ENCODE measurements at regions of chr20 and their contacts with region 1.

Region 1: GRCh38 chr20:38221119-38221589 is 39.4 kb downstream of the KIAA1755 start:
- DNase-seq: peak; percentile 80
- H3K4me3 ChIP-seq: no peak overlapping the region
- H3K27ac ChIP-seq: no peak overlapping the region
- H3K4me1 ChIP-seq: peaks cover 0 to 22% (median 8%) of the 10 kb centered on the region in 4 donors
- H3K27me3 ChIP-seq: no peaks in the 10 kb centered on the region
- CTCF ChIP-seq: peak; percentile 66 to 83 (median 76)
- EP300 ChIP-seq: no peak
- POLR2A ChIP-seq: no peak

Region 2: GRCh38 chr20:37564388-37565133 is 656.6 kb before region 1 on chr20:
- intact Hi-C with region 1: loop called (anchors 5 kb)
- DNase-seq: no peak
- H3K4me3 ChIP-seq: no peak overlapping the region
- H3K27ac ChIP-seq: no peak overlapping the region
- H3K4me1 ChIP-seq: peaks cover 0 to 6% (median 0%) of the 10 kb centered on the region in 4 donors
- H3K27me3 ChIP-seq: peaks cover 0 to 73% (median 32%) of the 10 kb centered on the region in 3 donors
- CTCF ChIP-seq: peak; percentile 56 to 85 (median 73)
- EP300 ChIP-seq: no peak
- POLR2A ChIP-seq: no peak

Region 3: GRCh38 chr20:38057351-38057972 is 163.7 kb before region 1 on chr20:
- intact Hi-C with region 1: loop called (anchors 1 kb)
- DNase-seq: peak; percentile 89
- H3K4me3 ChIP-seq: no peak overlapping the region
- H3K27ac ChIP-seq: no peak overlapping the region
- H3K4me1 ChIP-seq: no peaks in the 10 kb centered on the region
- H3K27me3 ChIP-seq: no peaks in the 10 kb centered on the region
- CTCF ChIP-seq: peak; percentile 66 to 94 (median 87)
- EP300 ChIP-seq: no peak
- POLR2A ChIP-seq: no peak

Region 4: DNA sequence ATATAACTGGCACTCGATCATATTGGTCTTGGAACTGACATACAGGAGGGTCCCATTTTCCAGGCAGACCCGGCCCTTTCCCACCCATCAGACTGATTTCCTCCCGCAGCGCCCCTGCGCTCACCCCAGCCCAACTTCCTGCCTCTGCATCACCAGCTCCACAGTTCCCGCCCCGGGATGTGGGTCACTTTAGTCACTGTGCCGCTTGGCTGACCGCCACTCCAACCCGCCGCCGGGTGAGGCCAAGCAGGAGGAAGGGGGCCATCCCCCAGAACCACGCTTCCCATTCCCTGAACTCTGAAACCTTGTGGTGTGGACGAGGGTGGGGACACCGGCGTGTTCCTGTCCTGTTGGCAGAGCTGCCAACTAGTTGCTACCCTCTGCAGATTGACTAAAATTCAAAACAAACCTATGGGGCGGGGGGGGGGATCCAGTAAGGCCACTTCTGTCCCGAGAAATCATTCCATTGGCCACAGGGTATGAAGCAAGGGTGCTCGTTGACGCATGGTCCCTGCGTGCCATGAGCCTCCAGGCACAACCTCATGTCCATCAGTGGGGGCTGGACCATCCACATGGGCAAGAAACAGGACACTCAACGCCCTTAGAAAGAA is 68.4 kb before region 1 on chr20:
- intact Hi-C with region 1: no loop called
- DNase-seq: peak; percentile 90
- H3K4me3 ChIP-seq: no peak overlapping the region
- H3K27ac ChIP-seq: peak overlapping the region; percentile 60 to 86 (median 72)
- H3K4me1 ChIP-seq: peaks cover 0 to 51% (median 35%) of the 10 kb centered on the region in 4 donors
- H3K27me3 ChIP-seq: no peaks in the 10 kb centered on the region
- CTCF ChIP-seq: no peak
- EP300 ChIP-seq: peak in 2 of 4 donors; percentile 4 to 35
- POLR2A ChIP-seq: no peak

Region 5: GRCh38 chr20:38165089-38165989 is 55.8 kb before region 1 on chr20 and contains the start of gene TGM2:
- intact Hi-C with region 1: loop called (anchors 5 kb)
- DNase-seq: peak; percentile 89
- H3K4me3 ChIP-seq: peak within 1 kb of the TSS; percentile 48 to 62 (median 50)
- H3K27ac ChIP-seq: peak within 1 kb of the TSS; percentile 67 to 86 (median 74)
- H3K4me1 ChIP-seq: peaks cover 0 to 61% (median 32%) of the 10 kb centered on the region in 4 donors
- H3K27me3 ChIP-seq: no peaks in the 10 kb centered on the region
- CTCF ChIP-seq: peak; percentile 80 to 93 (median 84)
- EP300 ChIP-seq: no peak
- POLR2A ChIP-seq: no peak
- total RNA-seq, gene TGM2: 14.8 to 104 (median 60.7) TPM

Region 6: GRCh38 chr20:38275815-38276550 is 54.8 kb after region 1 on chr20:
- intact Hi-C with region 1: no loop called
- DNase-seq: peak; percentile 46
- H3K4me3 ChIP-seq: no peak overlapping the region
- H3K27ac ChIP-seq: no peak overlapping the region
- H3K4me1 ChIP-seq: peaks cover 0 to 7% (median 2%) of the 10 kb centered on the region in 4 donors
- H3K27me3 ChIP-seq: peaks cover 0 to 3% (median 0%) of the 10 kb centered on the region in 3 donors
- CTCF ChIP-seq: no peak
- EP300 ChIP-seq: no peak
- POLR2A ChIP-seq: no peak

Region 7: GRCh38 chr20:38369389-38369788 is 148.2 kb after region 1 on chr20:
- intact Hi-C with region 1: no loop called
- DNase-seq: no peak
- H3K4me3 ChIP-seq: no peak overlapping the region
- H3K27ac ChIP-seq: no peak overlapping the region
- H3K4me1 ChIP-seq: no peaks in the 10 kb centered on the region
- H3K27me3 ChIP-seq: no peaks in the 10 kb centered on the region
- CTCF ChIP-seq: no peak
- EP300 ChIP-seq: no peak
- POLR2A ChIP-seq: no peak

Measured in sigmoid colon (tissue), 7 donors.